Activated CD8-positive, alpha-beta memory T cell treated with anti-CD3 and anti-CD28 coated beads, Interleukin-2, amount 10 ng/mL, durations not matched to agents 7 days and 5 days (primary cell): ENCODE measurements at regions of chr19 and their contacts with region 1.

Region 1: GRCh38 chr19:10095948-10096621 is 6.4 kb downstream of the ANGPTL6 start:
- DNase-seq: peak; percentile 92
- ATAC-seq: peak; percentile 95
- H3K4me3 Mint-ChIP-seq: peak overlapping the region; percentile 58
- H3K27ac Mint-ChIP-seq: peak overlapping the region; percentile 79
- H3K4me1 Mint-ChIP-seq: peaks cover 38% of the 10 kb centered on the region
- H3K27me3 Mint-ChIP-seq: no peaks in the 10 kb centered on the region

Region 2: DNA sequence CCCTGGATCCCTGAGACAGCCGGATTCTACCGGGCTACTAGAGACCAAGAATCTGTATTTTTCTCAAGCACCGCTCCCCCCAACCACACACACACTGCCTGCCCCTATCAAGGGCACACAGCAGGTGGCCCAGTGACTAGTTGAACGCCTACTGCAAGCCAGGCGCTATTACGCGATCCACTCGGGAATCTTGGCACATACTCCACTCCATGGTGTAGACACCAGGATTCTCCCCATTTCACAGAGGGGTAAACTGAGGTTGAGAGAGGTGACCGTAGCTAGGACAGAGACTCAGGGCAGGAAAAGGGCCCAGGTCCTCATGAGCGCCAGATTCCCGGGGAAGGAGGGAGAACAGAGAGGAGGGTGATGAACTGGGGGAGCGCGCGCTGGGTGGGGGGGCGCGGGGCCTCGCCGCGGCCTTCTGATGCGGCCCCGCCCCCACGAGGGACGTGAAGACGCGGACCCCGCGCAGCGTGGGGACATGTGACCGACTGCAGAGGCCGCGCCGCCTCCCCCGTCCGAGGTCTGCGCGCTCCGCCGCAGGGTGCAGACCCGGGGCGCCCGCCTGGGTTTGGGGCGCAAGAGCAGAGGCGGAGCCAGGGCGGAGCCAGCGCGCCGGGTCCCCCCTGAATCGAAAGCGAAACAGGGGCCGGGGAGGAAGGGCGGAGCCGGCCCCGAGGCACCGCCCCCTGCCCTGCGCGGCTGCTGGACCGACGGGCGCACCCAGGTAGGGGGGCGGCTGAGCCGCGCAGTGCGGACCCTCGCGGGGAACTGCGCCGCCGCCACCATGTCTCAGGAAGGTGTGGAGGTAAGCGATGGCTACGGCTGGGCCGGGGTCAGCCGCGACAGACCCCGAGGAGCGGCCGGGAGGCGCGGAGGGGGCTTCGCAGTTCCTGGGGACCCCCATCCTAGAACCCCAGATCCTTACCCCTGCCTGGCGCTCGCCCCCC is 10.2 kb before region 1 on chr19 and contains the start of gene SHFL:
- CTCF ChIA-PET with region 1: interaction called, 12 read pairs
- DNase-seq: peak; percentile 92
- ATAC-seq: peak; percentile 98
- H3K4me3 Mint-ChIP-seq: peak within 1 kb of the TSS; percentile 79
- H3K27ac Mint-ChIP-seq: peak within 1 kb of the TSS; percentile 84
- H3K4me1 Mint-ChIP-seq: peaks cover 30% of the 10 kb centered on the region
- H3K27me3 Mint-ChIP-seq: no peaks in the 10 kb centered on the region
- total RNA-seq, gene SHFL: 95.3 to 146 TPM

Region 3: DNA sequence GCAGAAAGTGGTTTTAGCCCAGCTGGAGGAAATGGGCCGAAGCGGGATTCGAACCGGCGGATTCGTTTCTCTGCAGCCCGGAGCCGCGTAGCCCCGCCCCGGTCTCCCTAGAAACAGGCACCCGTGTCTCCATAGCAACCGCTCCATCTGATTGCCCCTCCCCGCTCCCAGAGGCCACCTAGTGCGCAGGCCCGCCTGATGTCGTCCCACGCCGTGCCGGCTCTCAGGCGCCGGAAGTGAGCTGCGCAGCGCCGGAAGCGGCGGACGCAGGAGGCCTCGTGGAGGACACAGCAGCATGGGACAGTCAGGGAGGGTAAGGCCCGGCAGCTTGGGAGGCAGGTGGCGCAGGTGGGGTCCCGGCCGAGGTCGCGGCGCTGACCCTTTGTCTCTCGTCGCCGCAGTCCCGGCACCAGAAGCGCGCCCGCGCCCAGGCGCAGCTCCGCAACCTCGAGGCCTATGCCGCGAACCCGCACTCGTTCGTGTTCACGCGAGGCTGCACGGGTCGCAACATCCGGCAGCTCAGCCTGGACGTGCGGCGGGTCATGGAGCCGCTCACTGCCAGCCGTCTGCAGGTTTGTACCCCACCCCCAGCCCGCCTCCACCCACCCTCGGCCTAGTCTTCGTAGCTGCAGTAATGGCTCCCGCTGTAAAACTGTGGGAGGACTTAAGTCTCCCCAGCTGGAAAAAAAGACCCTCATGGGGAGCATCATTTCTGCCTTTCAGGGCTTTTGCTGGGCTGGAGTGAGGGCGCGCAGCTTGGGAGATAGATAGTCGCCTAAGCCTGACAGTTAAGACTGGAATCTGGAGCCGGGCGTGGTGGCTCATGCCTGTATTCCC is 10.2 kb after region 1 on chr19 and contains the start of gene PPAN:
- CTCF ChIA-PET with region 1: interaction called, 147 read pairs
- DNase-seq: peak; percentile 99
- ATAC-seq: peak; percentile 73
- H3K4me3 Mint-ChIP-seq: peak within 1 kb of the TSS; percentile 77
- H3K27ac Mint-ChIP-seq: peak within 1 kb of the TSS; percentile 99
- H3K4me1 Mint-ChIP-seq: peaks cover 78% of the 10 kb centered on the region
- H3K27me3 Mint-ChIP-seq: no peaks in the 10 kb centered on the region
- total RNA-seq, gene PPAN: 98.5 to 115 TPM

Region 4: GRCh38 chr19:10112895-10113591 is 17.0 kb after region 1 on chr19:
- CTCF ChIA-PET with region 1: interaction called, 147 read pairs
- DNase-seq: peak; percentile 86
- ATAC-seq: peak; percentile 47
- H3K4me3 Mint-ChIP-seq: peak overlapping the region; percentile 87
- H3K27ac Mint-ChIP-seq: peak overlapping the region; percentile 98
- H3K4me1 Mint-ChIP-seq: peaks cover 70% of the 10 kb centered on the region
- H3K27me3 Mint-ChIP-seq: no peaks in the 10 kb centered on the region